ENCODE measurements at regions of chr17 and their contacts with region 1.

Region 1: DNA sequence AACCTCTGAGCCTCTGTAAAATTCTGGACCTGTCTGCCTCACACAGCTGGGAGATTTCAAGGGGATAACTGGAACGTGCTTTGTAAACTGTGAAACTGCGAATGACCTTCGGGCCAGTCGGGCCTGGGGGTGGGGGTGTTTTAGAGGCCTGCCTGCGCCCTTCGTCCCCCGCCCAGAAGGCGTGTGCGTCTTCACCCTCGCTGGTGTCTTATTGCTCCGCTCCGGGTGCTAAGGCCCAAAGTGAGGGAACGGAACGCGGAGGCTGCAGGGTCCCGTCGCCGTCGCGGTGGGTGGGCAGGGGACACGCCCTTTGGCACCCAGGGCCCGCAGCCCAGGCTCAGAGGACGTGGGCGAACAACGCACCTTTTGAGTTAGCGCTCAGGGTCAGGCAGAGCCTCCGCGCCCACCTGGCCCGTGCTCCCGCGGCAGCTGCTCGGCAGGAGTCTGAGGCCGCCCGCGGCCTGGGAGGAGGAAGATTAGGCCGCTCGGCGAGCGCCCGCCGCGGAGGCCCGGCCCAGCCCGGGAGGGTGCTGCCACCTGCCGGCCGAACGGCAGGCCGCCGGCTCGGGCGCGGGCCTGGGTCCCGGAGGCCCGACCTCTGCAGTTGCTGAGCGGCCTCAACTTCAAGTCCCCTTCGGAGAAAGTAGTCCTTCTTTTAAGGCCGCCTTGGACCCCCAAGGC is 29.7 kb downstream of the DCAKD start:
- DNase-seq: peak; percentile 83
- ATAC-seq: peak; percentile 73
- H3K4me3 Mint-ChIP-seq: no peak overlapping the region
- H3K27ac Mint-ChIP-seq: no peak overlapping the region
- H3K4me1 Mint-ChIP-seq: peaks cover 24% of the 10 kb centered on the region
- H3K27me3 Mint-ChIP-seq: peaks cover 31% of the 10 kb centered on the region

Region 2: DNA sequence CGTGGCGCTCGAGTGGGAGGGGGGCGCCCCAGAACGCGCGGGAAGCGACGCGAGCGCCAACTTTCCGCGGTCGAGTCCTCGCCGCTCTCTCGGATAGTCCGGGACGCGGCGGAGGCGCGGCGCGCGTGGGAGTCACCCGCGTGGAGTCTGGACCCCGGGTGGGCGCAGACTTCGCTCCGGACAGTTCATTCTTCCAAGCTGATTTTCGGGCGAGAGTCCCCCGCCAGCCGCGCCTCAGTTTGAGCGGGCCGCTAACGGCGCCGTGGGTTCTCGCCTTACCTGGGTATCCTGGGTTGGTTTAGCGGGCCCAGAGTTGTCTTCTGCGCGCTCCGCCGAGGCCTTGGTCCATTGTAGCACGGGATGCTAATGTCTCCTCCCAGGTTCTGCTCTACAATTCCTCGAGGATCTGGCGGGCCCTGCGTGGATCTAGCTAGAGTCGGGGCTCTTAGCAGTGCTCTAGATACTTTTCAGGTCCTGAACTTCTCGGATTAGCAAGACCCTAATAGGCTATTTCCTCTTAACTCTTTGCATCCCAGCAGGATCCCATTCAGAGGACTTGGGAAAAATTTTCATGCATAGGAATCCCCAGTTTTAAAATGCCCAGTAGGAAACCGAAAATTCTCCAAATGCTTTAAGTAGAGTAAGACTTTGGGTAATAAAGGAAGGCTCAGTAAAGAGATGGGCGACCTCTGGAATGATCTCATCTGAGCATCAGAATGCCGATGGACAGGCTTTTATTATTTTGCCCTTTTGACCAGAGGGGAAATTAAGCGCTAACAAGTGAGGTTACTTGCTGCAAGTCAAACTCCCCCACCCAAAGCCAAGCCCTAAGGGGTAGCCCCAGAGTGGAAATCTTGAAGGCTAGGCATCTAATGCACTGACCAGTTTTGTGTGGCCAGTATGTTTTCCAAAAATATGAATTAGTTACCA is 191.1 kb before region 1 on chr17:
- CTCF ChIA-PET with region 1: no interaction called
- POLR2A ChIA-PET with region 1: no interaction called
- intact Hi-C with region 1: no loop called
- DNase-seq: peak; percentile 34
- ATAC-seq: peak; percentile 21
- H3K4me3 Mint-ChIP-seq: peak overlapping the region; percentile 65
- H3K27ac Mint-ChIP-seq: no peak overlapping the region
- H3K4me1 Mint-ChIP-seq: peaks cover 13% of the 10 kb centered on the region
- H3K27me3 Mint-ChIP-seq: peaks cover 36% of the 10 kb centered on the region

Region 3: GRCh38 chr17:44878627-44879221 is 143.0 kb before region 1 on chr17:
- CTCF ChIA-PET with region 1: interaction called, 11 read pairs
- POLR2A ChIA-PET with region 1: no interaction called
- intact Hi-C with region 1: no loop called
- DNase-seq: peak; percentile 47
- ATAC-seq: no peak
- H3K4me3 Mint-ChIP-seq: no peak overlapping the region
- H3K27ac Mint-ChIP-seq: no peak overlapping the region
- H3K4me1 Mint-ChIP-seq: no peaks in the 10 kb centered on the region
- H3K27me3 Mint-ChIP-seq: no peaks in the 10 kb centered on the region

Region 4: GRCh38 chr17:44911133-44912001 is 110.4 kb before region 1 on chr17:
- CTCF ChIA-PET with region 1: interaction called, 35 read pairs
- POLR2A ChIA-PET with region 1: no interaction called
- intact Hi-C with region 1: no loop called
- DNase-seq: peak; percentile 71
- ATAC-seq: peak; percentile 86
- H3K4me3 Mint-ChIP-seq: no peak overlapping the region
- H3K27ac Mint-ChIP-seq: no peak overlapping the region
- H3K4me1 Mint-ChIP-seq: no peaks in the 10 kb centered on the region
- H3K27me3 Mint-ChIP-seq: peaks cover 24% of the 10 kb centered on the region

Region 5: DNA sequence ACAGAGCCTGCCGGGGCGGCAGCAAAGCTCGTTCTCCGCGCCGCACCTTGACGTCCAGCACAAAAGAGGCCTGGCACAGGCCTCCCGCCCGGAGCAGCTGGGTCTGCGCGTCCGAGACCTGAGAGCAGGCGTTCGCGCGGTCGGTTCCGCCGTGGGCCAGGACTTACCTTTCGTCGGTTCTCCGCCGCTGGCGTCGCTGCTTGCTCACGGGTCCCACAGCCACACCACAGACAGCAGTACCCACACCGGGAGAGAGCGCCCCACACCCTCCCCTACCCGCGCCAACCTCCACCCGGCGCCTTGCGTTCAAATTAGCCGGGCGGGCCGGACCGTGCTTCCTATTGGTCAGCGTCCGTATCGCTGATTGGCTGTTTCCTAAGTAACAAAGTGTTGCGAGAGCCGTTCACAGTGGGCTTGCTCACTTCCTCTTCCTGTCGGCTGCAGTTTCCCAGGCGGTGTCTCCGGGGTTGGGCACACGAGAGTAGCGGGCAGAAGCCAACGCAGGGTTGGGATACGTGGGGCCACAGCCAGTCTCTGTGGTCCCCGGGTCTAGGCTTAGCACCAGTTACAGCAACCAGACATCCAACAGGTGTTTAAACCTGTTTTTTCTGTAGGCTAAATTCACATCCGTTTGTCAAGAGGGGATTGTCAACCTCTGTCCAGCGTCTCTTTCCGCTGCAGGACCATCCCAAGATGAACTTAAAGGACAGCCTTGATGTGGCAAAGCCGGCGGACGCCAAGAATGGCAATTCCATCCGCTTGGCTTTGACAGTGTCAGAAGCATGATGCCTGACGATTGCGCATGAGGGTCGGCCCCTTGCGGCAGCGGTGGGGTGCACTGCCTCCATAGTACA is 74.1 kb before region 1 on chr17 and contains the start of gene KIF18B:
- CTCF ChIA-PET with region 1: interaction called, 5 read pairs
- POLR2A ChIA-PET with region 1: no interaction called
- intact Hi-C with region 1: loop called (anchors 1 to 2 kb)
- DNase-seq: peak; percentile 96
- ATAC-seq: peak; percentile 98
- H3K4me3 Mint-ChIP-seq: peak within 1 kb of the TSS; percentile 90
- H3K27ac Mint-ChIP-seq: peak within 1 kb of the TSS; percentile 88
- H3K4me1 Mint-ChIP-seq: peaks cover 4% of the 10 kb centered on the region
- H3K27me3 Mint-ChIP-seq: no peaks in the 10 kb centered on the region
- total RNA-seq, gene KIF18B: 38.9 to 48.7 TPM

Region 6: DNA sequence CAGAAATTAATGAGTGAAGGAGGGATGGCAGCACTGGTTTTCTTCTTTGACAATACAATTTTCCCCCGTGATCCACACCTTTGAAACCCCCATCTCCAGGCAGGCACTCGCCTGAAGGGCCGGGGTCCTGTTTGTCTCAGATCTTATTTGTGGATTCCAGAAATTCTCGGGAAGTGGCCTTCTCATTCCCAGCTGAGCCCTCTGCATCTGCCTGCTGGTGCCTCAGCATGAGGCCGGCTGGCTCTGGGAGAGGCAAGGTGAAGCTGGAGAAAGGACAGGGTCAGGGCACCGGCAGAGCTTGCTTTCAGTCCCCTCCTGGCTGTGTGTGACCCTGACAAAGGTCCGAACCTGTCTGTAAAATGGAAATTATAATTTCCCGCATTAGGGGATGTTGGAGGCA is 17.9 kb before region 1 on chr17:
- CTCF ChIA-PET with region 1: interaction called, 11 read pairs
- POLR2A ChIA-PET with region 1: no interaction called
- intact Hi-C with region 1: no loop called
- DNase-seq: no peak
- ATAC-seq: no peak
- H3K4me3 Mint-ChIP-seq: no peak overlapping the region
- H3K27ac Mint-ChIP-seq: no peak overlapping the region
- H3K4me1 Mint-ChIP-seq: no peaks in the 10 kb centered on the region
- H3K27me3 Mint-ChIP-seq: peaks cover 13% of the 10 kb centered on the region